MCF 10A (cell line): ENCODE measurements at regions of chr20 and their contacts with region 1.

Region 1: GRCh38 chr20:56516631-56517030 is 7.9 kb upstream of the FAM209A start:
- DNase-seq: no peak
- H3K4me3 Mint-ChIP-seq: no peak overlapping the region
- H3K27ac Mint-ChIP-seq: no peak overlapping the region
- H3K4me1 Mint-ChIP-seq: no peaks in the 10 kb centered on the region
- H3K27me3 Mint-ChIP-seq: no peaks in the 10 kb centered on the region
- CTCF ChIP-seq: no peak

Region 2: DNA sequence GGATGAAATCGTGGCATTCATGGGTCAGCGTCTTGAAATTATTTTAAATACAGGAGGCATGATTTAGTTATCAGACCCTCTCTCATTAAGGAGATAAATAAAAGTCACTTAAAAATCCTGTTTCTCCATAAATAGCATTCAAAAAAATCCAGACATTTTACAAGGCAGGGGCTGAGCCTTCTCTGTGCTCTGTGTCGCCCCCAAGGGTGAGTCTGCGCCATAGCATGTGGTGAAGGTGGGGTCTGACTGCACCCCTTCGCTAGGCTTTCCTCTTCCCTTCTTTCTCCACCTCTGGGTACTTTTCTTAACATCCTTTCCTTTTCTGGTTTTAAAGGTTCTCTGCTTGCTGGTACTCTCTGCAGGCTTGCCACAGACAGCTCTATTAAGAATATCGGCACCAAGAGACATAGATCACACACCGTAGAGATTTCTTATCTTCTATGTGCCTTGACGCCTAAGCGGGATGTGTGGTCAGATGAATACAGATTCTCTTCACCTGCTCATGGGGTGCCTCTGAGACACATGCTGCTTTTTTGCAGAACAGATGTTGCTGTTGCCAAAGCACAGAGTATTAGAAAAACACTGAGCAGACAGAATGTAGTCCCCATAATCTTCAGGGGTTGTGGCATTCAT is 12.1 kb before region 1 on chr20:
- CTCF ChIA-PET with region 1: interaction called, 13 read pairs
- POLR2A ChIA-PET with region 1: no interaction called
- intact Hi-C with region 1: no loop called
- DNase-seq: peak; percentile 1
- H3K4me3 Mint-ChIP-seq: no peak overlapping the region
- H3K27ac Mint-ChIP-seq: no peak overlapping the region
- H3K4me1 Mint-ChIP-seq: no peaks in the 10 kb centered on the region
- H3K27me3 Mint-ChIP-seq: no peaks in the 10 kb centered on the region
- CTCF ChIP-seq: peak; percentile 29